H1 (cell line): ENCODE measurements at regions of chr22 and their contacts with region 1.

Region 1: DNA sequence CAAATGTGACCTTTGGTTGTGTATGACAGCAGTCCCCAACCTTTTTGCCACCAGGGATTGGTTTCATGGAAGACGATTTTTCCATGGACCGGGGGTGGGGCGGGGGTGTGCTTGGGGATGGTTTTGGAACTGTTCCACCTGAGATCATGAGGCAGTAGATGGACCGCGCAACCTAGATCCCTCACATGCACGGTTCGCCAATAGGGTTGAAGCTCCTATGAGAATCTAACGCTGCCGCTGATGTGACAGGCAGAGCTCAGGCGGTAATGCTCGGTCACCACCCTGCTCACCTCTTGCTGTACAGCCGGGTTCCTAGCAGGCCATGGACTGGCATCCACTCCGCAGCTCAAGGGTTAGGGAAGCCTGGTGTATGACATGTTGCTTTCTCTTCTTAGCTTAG is 21.9 kb downstream of the RBX1 start:
- DNase-seq: no peak
- H3K4me3 ChIP-seq: no peak overlapping the region
- H3K27ac ChIP-seq: no peak overlapping the region
- H3K4me1 ChIP-seq: no peaks in the 10 kb centered on the region
- H3K27me3 ChIP-seq: no peaks in the 10 kb centered on the region
- CTCF ChIP-seq: no peak
- EP300 ChIP-seq: no peak
- POLR2A ChIP-seq: no peak
- RAD21 ChIP-seq: no peak

Region 2: GRCh38 chr22:40957601-40958000 is 15.5 kb before region 1 on chr22:
- CTCF ChIA-PET with region 1: interaction called, 4 read pairs
- POLR2A ChIA-PET with region 1: interaction called, 12 read pairs
- DNase-seq: no peak
- H3K4me3 ChIP-seq: no peak overlapping the region
- H3K27ac ChIP-seq: no peak overlapping the region
- H3K4me1 ChIP-seq: peaks cover 0 to under 1% (median 0%) of the 10 kb centered on the region in 4 experiments; a peak in 1 of 7 replicates
- H3K27me3 ChIP-seq: no peaks in the 10 kb centered on the region
- CTCF ChIP-seq: no peak
- EP300 ChIP-seq: no peak
- POLR2A ChIP-seq: no peak
- RAD21 ChIP-seq: no peak